ENCODE measurements at regions of chr7 and their contacts with region 1.

Region 1: DNA sequence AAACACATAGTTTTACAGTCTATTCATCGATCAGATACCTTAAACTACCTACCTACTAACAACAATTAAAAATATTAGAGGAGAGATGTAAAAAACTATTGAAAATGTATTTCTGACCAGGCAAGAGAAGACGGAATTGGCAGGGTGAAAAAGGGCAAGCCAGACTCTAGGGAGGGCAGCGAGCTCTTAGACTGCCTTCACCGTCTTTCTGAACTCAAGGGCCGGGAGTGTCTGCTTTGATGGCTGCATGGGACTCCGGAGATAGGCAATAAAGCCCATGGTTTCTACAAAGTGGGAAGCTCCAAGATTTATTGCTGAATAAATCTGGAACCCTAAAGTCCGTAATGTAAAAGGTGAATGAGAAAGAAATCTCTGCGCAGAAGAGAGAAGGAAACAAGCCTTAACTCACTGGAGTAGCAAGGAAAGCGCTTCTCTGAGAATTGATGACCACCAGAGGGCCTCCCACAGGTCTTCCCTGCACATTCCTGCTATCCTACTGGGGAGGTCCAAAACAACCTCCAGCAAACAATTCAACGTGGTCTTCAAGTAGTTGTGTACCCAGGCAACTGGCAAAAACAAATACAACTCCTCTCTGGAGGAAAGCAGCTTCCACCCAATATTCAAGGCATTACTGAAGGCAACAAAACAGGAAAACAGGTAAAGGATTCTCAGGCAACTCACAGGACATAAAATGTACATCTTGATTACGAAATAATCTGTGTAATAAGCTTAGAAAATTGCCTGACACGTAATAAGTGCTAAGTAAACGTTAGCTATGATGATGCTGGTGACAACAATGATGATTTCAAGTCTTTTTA is 181.3 kb downstream of the SDK1 start:
- DNase-seq: peak; percentile 52
- H3K4me3 ChIP-seq: no peak overlapping the region
- H3K27ac ChIP-seq: no peak overlapping the region
- H3K4me1 ChIP-seq: peaks cover 0 to 7% of the 10 kb centered on the region in 2 experiments; a peak in 1 of 4 replicates
- H3K27me3 ChIP-seq: no peaks in the 10 kb centered on the region
- CTCF ChIP-seq: peak; percentile 64
- EP300 ChIP-seq: no peak
- RAD21 ChIP-seq: peak; percentile 70

Region 2: GRCh38 chr7:3210531-3210930 is 271.8 kb before region 1 on chr7:
- CTCF ChIA-PET with region 1: no interaction called
- POLR2A ChIA-PET with region 1: no interaction called
- DNase-seq: peak; percentile 55
- H3K4me3 ChIP-seq: no peak overlapping the region
- H3K27ac ChIP-seq: no peak overlapping the region
- H3K4me1 ChIP-seq: no peaks in the 10 kb centered on the region; a peak in 1 of 4 replicates
- H3K27me3 ChIP-seq: no peaks in the 10 kb centered on the region
- CTCF ChIP-seq: no peak
- EP300 ChIP-seq: no peak
- RAD21 ChIP-seq: peak; percentile 73

Region 3: GRCh38 chr7:3451338-3452100 is 30.8 kb before region 1 on chr7:
- CTCF ChIA-PET with region 1: interaction called, 10 read pairs
- POLR2A ChIA-PET with region 1: no interaction called
- DNase-seq: no peak
- H3K4me3 ChIP-seq: no peak overlapping the region
- H3K27ac ChIP-seq: no peak overlapping the region
- H3K4me1 ChIP-seq: no peaks in the 10 kb centered on the region
- H3K27me3 ChIP-seq: no peaks in the 10 kb centered on the region
- CTCF ChIP-seq: no peak
- EP300 ChIP-seq: no peak
- RAD21 ChIP-seq: no peak

Region 4: DNA sequence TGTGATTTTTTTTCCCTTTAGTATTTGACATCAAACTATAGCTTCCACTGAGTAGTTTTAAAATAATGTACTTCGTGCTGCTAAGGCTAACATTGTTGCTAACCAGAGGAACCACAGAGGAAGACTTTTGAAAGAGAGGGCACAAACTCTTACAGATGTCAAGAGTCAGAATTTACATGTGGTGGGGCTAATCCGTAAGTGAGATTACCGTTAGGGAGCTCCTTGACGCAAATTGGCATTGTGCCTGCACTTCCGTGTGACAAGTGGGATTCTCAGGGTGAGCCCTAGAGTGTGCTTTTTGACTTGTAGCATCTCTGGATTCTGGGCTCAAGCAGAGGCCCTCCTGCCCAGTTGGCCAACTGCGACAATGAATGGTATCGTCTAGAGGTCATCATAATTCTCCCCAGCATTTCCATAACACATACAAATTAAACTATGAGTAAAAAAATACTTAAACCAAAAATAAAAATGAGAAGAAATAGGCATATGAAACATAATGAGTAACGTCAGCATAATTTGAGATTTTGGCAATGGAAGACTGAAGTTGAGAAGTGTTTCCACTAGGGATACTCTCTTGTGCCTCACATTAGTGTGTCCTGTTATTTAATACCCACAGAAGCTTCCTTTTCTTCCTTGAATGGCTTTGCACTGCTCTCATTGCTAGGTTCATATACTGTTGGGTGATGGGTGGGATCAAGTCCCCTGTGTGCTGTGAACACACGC is 17.3 kb before region 1 on chr7:
- CTCF ChIA-PET with region 1: interaction called, 10 read pairs
- POLR2A ChIA-PET with region 1: no interaction called
- DNase-seq: no peak
- H3K4me3 ChIP-seq: no peak overlapping the region
- H3K27ac ChIP-seq: no peak overlapping the region
- H3K4me1 ChIP-seq: peaks cover 0 to 2% of the 10 kb centered on the region in 2 experiments; a peak in 1 of 4 replicates
- H3K27me3 ChIP-seq: no peaks in the 10 kb centered on the region
- CTCF ChIP-seq: no peak
- EP300 ChIP-seq: no peak
- RAD21 ChIP-seq: no peak

Region 5: GRCh38 chr7:3493499-3493898 is 11.1 kb after region 1 on chr7:
- CTCF ChIA-PET with region 1: interaction called, 26 read pairs
- POLR2A ChIA-PET with region 1: interaction called, 3 read pairs
- DNase-seq: no peak
- H3K4me3 ChIP-seq: no peak overlapping the region
- H3K27ac ChIP-seq: peak overlapping the region in 1 of 2 experiments; percentile 6; a peak in 2 of 4 replicates
- H3K4me1 ChIP-seq: peaks cover 5 to 13% of the 10 kb centered on the region in 2 experiments; a peak in 3 of 4 replicates
- H3K27me3 ChIP-seq: no peaks in the 10 kb centered on the region
- CTCF ChIP-seq: no peak
- EP300 ChIP-seq: no peak
- RAD21 ChIP-seq: no peak

Measured in SK-N-SH (cell line).